ENCODE measurements at regions of chr13 and their contacts with region 1.

Region 1: GRCh38 chr13:41960639-41961465 is at the start of gene VWA8:
- DNase-seq: peak; percentile 88 to 94
- ATAC-seq: peak; percentile 97
- H3K4me3 ChIP-seq: peak within 1 kb of the TSS; percentile 67 to 68
- H3K27ac ChIP-seq: peak within 1 kb of the TSS; percentile 53 to 58
- H3K4me1 ChIP-seq: no peaks in the 10 kb centered on the region
- H3K27me3 ChIP-seq: no peaks in the 10 kb centered on the region
- total RNA-seq, gene VWA8: 15.2 to 18.2 TPM

Region 2: DNA sequence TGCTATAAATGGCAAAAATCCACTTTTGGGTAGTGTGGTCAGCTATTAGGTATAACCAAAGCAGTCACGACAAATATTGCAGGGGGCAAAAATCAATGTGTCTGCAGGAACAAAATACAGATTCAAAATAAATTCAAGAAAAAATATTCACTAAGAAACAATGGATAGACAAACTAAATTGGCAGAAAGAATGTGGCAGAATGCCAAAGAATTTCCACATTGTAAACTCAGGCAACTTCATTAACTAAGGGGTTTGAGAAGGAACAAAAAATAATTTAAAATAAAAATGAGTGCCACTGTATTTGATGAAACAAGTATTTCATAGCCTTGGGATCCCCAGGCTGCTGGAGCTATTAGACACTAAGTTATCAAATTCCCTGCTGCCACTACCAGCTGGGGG is 193.1 kb before region 1 on chr13:
- intact Hi-C with region 1: no loop called
- DNase-seq: no peak
- ATAC-seq: no peak
- H3K4me3 ChIP-seq: no peak overlapping the region
- H3K27ac ChIP-seq: no peak overlapping the region
- H3K4me1 ChIP-seq: no peaks in the 10 kb centered on the region
- H3K27me3 ChIP-seq: no peaks in the 10 kb centered on the region

Region 3: DNA sequence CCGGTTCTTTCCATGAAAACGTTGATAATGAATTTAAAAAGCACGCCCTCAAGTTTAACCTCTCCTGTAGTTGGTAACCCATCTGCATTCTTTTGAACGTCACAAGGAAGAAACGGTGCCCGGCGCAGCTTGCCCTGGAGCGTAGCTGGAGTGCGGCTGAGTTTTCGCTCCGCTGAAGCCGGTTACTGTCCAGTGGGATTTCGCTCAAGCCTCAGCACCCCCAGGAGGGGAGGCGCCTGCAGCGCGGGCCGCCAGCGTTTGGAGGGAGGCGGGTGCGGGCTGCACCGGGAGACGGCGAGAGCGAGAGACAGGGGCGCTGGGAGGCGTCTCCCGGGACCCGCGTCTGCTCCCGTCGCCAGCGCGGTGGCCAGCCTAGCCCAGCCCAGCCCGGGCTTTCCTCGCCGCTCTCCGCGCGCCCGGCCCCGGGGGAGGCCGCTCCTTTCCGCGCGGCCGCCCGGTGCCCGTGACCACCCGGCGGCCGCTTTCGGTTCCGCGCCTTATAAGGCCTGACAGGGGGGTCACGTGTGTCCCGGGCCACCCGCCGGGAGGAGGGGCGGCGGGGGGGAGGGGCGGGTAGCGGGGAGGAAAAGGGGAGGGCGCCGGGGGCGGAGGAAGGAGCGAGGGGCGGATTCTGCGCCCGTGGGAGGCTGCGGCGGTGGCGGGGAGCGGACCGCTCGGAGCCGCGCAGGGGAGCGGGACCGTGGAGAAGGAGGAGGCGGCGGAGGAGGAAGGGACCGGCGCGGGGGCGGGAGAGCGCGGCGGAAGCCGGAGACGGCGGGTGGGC is 79.3 kb after region 1 on chr13:
- intact Hi-C with region 1: loop called in 1 of 2 experiments (anchors 5 kb)
- DNase-seq: peak; percentile 95 to 98
- ATAC-seq: peak; percentile 94
- H3K4me3 ChIP-seq: peak overlapping the region; percentile 81 to 95
- H3K27ac ChIP-seq: peak overlapping the region; percentile 94 to 97
- H3K4me1 ChIP-seq: no peaks in the 10 kb centered on the region
- H3K27me3 ChIP-seq: no peaks in the 10 kb centered on the region

Region 4: GRCh38 chr13:42229294-42229693 is 268.4 kb after region 1 on chr13:
- intact Hi-C with region 1: no loop called
- DNase-seq: no peak
- ATAC-seq: no peak
- H3K4me3 ChIP-seq: no peak overlapping the region
- H3K27ac ChIP-seq: no peak overlapping the region
- H3K4me1 ChIP-seq: peaks cover 0 to 2% of the 10 kb centered on the region in 2 donors
- H3K27me3 ChIP-seq: no peaks in the 10 kb centered on the region